ENCODE measurements at regions of chr9 and their contacts with region 1.

Region 1: GRCh38 chr9:3746296-3747275 is 220.8 kb upstream of the RFX3 start:
- DNase-seq: no peak
- H3K4me3 Mint-ChIP-seq: peak overlapping the region; percentile 4
- H3K27ac Mint-ChIP-seq: peak overlapping the region; percentile 83
- H3K4me1 Mint-ChIP-seq: peaks cover 41% of the 10 kb centered on the region
- H3K27me3 Mint-ChIP-seq: no peaks in the 10 kb centered on the region

Region 2: DNA sequence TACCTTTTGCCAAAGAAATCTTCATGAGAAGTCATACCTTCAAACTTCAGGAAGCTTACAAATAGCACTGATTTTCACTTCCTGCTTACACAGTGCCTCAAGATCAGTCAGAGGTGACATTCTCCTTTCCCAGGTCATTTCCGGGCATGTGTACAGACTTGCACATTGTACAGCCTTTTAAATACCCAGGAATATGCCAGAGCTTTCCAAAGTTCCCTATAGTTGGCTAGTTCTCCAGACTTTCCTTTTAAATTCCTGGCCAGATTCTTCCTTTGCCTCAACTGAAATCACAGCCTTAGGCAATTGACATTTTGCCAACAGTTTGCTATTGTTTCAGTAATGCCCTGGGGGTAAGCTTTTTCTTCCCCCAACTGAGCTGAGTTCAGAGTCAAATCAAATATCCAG is 268.0 kb before region 1 on chr9:
- intact Hi-C with region 1: loop called (anchors 2 kb)
- DNase-seq: no peak
- H3K4me3 Mint-ChIP-seq: peak overlapping the region; percentile 35
- H3K27ac Mint-ChIP-seq: peak overlapping the region; percentile 82
- H3K4me1 Mint-ChIP-seq: peaks cover 77% of the 10 kb centered on the region
- H3K27me3 Mint-ChIP-seq: no peaks in the 10 kb centered on the region

Region 3: GRCh38 chr9:3760031-3760430 is 13.4 kb after region 1 on chr9:
- intact Hi-C with region 1: loop called (anchors 2 kb)
- DNase-seq: no peak
- H3K4me3 Mint-ChIP-seq: no peak overlapping the region
- H3K27ac Mint-ChIP-seq: no peak overlapping the region
- H3K4me1 Mint-ChIP-seq: peaks cover 23% of the 10 kb centered on the region
- H3K27me3 Mint-ChIP-seq: no peaks in the 10 kb centered on the region

Region 4: GRCh38 chr9:3912817-3913216 is 166.2 kb after region 1 on chr9:
- intact Hi-C with region 1: no loop called
- DNase-seq: no peak
- H3K4me3 Mint-ChIP-seq: no peak overlapping the region
- H3K27ac Mint-ChIP-seq: no peak overlapping the region
- H3K4me1 Mint-ChIP-seq: peaks cover 8% of the 10 kb centered on the region
- H3K27me3 Mint-ChIP-seq: peaks cover 3% of the 10 kb centered on the region

Region 5: GRCh38 chr9:4306066-4306775 is 559.6 kb after region 1 on chr9:
- intact Hi-C with region 1: loop called (anchors 1 kb)
- DNase-seq: no peak
- H3K4me3 Mint-ChIP-seq: peak overlapping the region; percentile 40
- H3K27ac Mint-ChIP-seq: peak overlapping the region; percentile 76
- H3K4me1 Mint-ChIP-seq: peaks cover 58% of the 10 kb centered on the region
- H3K27me3 Mint-ChIP-seq: peaks cover 14% of the 10 kb centered on the region

Region 6: DNA sequence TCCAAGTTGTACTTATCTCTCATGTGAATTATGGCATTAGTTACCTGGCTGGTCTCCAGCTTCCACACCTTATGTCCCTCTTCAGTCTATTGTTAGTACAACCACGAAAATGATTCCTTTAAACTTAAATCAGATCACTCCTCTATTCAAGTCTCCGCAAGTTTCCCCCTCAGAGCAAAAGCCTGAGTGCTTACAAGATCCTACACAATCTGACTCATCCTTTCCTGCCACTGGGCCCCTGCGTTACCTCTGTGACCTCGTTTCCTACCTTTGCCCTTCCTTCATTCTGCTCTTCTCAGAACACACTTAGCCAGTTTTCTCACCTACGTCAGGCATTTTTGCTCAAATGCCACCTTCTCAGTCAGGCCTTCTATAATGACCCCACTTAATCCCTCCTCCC is 598.4 kb after region 1 on chr9:
- intact Hi-C with region 1: loop called (anchors 2 kb)
- DNase-seq: peak; percentile 10
- H3K4me3 Mint-ChIP-seq: peak overlapping the region; percentile 23
- H3K27ac Mint-ChIP-seq: peak overlapping the region; percentile 8
- H3K4me1 Mint-ChIP-seq: peaks cover 16% of the 10 kb centered on the region
- H3K27me3 Mint-ChIP-seq: peaks cover 2% of the 10 kb centered on the region